Ascending aorta (tissue), 2 donors: ENCODE measurements at regions of chr3 and their contacts with region 1.

Region 1: GRCh38 chr3:10224784-10225665 is 23.2 kb upstream of the TATDN2 start:
- DNase-seq: peak in 1 of 2 donors; percentile 91
- H3K4me3 ChIP-seq: no peak overlapping the region
- H3K27ac ChIP-seq: peak overlapping the region; percentile 23 to 38
- H3K4me1 ChIP-seq: no peaks in the 10 kb centered on the region
- H3K27me3 ChIP-seq: no peaks in the 10 kb centered on the region
- CTCF ChIP-seq: peak; percentile 83 to 89 (median 88)

Region 2: DNA sequence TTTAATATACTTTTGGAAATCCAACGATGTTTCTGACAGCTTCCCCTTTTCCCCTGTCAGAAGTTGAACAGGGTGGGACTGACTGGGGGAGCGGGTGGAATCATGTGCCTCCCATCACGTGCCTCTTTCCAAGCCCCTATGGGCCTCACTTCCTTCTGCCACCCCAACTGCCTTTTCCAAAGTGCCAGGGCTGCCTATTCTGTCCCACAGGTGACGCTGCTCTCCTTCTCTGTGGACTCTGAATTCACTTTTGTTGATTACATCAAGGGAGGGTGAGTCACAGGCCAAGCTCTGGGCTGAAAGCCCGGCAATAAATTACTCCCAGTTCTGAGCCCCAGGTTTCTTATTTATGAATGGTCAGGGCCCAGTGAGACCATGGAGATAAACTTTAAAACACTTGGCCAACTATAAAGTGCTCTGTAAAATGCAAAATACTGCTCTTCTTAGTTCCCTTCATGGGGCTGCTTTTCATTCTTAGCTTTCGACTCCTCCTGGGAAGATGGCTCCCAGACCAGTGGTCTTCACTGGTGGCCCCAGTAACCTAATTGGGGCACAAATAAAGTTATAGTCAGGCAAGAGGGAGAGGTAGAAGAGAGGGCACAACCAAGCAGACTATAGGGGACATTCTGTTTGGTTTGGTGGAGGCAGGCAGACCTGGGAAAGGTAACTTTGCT is 509.1 kb before region 1 on chr3:
- intact Hi-C with region 1: loop called (anchors 5 kb)
- DNase-seq: peak; percentile 66 to 93
- H3K4me3 ChIP-seq: no peak overlapping the region
- H3K27ac ChIP-seq: peak overlapping the region; percentile 73 to 86
- H3K4me1 ChIP-seq: peaks cover 3 to 4% of the 10 kb centered on the region in 2 donors
- H3K27me3 ChIP-seq: no peaks in the 10 kb centered on the region
- CTCF ChIP-seq: peak; percentile 85 to 89 (median 87)

Region 3: GRCh38 chr3:10026084-10026890 is 198.7 kb before region 1 on chr3 and contains the start of gene FANCD2:
- intact Hi-C with region 1: loop called (anchors 1 kb)
- DNase-seq: peak; percentile 56 to 93
- H3K4me3 ChIP-seq: peak within 1 kb of the TSS; percentile 72 to 83
- H3K27ac ChIP-seq: peak within 1 kb of the TSS; percentile 59 to 62
- H3K4me1 ChIP-seq: peaks cover 7 to 22% of the 10 kb centered on the region in 2 donors
- H3K27me3 ChIP-seq: no peaks in the 10 kb centered on the region
- CTCF ChIP-seq: no peak
- total RNA-seq, gene FANCD2: 54.6 TPM

Region 4: GRCh38 chr3:10142707-10143566 is 82.1 kb before region 1 on chr3:
- intact Hi-C with region 1: loop called (anchors 2 kb)
- DNase-seq: no peak
- H3K4me3 ChIP-seq: peak overlapping the region; percentile 65 to 91
- H3K27ac ChIP-seq: peak overlapping the region; percentile 90 to 96
- H3K4me1 ChIP-seq: peaks cover 7 to 22% of the 10 kb centered on the region in 2 donors
- H3K27me3 ChIP-seq: no peaks in the 10 kb centered on the region
- CTCF ChIP-seq: no peak

Region 5: DNA sequence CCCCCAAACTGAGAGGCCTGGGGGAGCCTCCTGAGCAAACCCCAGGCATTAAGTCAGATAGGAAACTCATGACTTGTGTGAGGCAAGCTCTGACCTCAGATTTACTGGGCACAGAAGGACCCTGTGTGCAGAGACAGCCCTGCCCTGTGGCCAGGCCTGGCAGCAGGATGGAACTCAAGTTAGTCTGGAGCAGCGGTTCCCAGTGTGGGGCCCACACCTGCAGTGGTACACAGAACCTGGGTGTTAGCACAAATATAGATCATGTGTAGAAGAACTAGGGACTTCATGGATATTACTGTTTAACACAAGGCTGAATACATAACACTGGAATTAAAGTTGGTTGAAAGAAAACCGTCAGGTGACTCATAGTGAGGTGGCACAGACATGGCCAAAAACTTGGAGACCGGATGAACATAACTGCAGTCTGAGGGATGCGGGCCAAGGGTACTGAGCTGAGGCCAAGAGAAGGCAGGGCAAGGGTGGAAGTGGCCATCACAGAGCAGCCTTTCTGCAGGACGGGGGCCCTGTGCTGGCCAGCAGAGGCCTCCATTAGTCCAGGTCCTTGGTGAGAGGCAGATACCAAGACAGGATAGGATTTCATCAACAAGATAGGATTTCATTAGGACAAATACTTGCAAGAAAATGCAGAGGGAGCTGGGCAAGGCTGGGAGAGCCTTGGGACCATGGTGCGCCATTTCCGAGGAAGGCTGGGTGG is 19.4 kb before region 1 on chr3:
- intact Hi-C with region 1: loop called (anchors 1 kb)
- DNase-seq: peak; percentile 68 to 93
- H3K4me3 ChIP-seq: no peak overlapping the region
- H3K27ac ChIP-seq: peak overlapping the region; percentile 90 to 92
- H3K4me1 ChIP-seq: peaks cover 16 to 35% of the 10 kb centered on the region in 2 donors
- H3K27me3 ChIP-seq: no peaks in the 10 kb centered on the region
- CTCF ChIP-seq: no peak